ENCODE measurements at regions of chr20 and their contacts with region 1.

Region 1: GRCh38 chr20:23086056-23086566 is at the start of gene CD93:
- H3K4me3 ChIP-seq: no peak within 1 kb of the TSS
- H3K27ac ChIP-seq: no peak within 1 kb of the TSS
- H3K4me1 ChIP-seq: no peaks in the 10 kb centered on the region
- CTCF ChIP-seq: no peak

Region 2: GRCh38 chr20:23099791-23100698 is 13.9 kb after region 1 on chr20:
- CTCF ChIA-PET with region 1: interaction called, 10 read pairs
- POLR2A ChIA-PET with region 1: no interaction called
- H3K4me3 ChIP-seq: no peak overlapping the region
- H3K27ac ChIP-seq: no peak overlapping the region
- H3K4me1 ChIP-seq: no peaks in the 10 kb centered on the region
- CTCF ChIP-seq: no peak

Region 3: GRCh38 chr20:23235173-23236027 is 149.3 kb after region 1 on chr20:
- CTCF ChIA-PET with region 1: no interaction called
- POLR2A ChIA-PET with region 1: no interaction called
- H3K4me3 ChIP-seq: no peak overlapping the region
- H3K27ac ChIP-seq: no peak overlapping the region
- H3K4me1 ChIP-seq: no peaks in the 10 kb centered on the region
- CTCF ChIP-seq: peak; percentile 64